ENCODE measurements at regions of chr3 and their contacts with region 1.

Region 1: DNA sequence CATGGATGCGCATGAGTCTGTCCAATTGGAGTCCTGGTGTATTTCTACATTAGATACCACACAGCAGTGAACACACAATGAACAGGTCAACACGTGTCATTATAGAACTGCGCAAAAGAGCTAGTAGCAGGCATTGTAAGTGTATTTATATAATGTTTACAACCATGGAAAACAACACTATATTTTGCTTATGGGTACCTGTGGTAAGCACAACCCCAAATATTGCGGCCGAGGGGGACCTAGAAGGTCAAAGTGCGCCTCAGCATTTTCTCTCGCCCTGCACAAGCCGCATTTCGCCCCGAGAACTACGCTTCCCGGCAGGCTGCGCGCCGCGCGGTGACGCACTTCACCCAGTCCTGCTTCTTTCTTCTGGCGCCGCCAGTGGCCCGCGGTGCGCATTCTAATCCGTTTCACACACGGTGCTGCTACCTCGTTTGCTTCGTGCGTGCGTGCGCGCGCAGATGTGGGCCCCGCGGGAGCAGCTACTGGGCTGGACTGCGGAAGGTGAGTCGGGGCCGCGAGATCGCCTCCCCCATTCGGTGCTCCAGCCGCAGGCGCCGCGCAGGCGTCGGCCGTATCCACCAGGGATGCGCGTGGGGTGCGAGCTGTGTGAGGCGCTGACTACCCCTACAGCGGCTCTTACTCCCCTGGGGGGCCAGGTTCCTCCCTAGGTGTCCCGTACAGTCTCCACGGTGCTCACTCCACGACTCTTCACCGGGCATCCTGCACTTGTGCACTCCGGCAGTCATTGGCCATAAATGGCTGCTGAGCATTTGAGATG is at the start of gene ZNF589:
- DNase-seq: peak; percentile 90 to 96 (median 94)
- H3K4me3 ChIP-seq: peak within 1 kb of the TSS; percentile 64 to 99
- H3K4me3 Mint-ChIP-seq: peak within 1 kb of the TSS; percentile 87 to 97 (median 92)
- H3K27ac ChIP-seq: peak within 1 kb of the TSS; percentile 69
- H3K27ac Mint-ChIP-seq: peak within 1 kb of the TSS; percentile 87 to 96 (median 92)
- H3K4me1 ChIP-seq: peaks cover 30% of the 10 kb centered on the region
- H3K4me1 Mint-ChIP-seq: peaks cover 8 to 26% (median 11%) of the 10 kb centered on the region in 4 donors
- H3K27me3 ChIP-seq: no peaks in the 10 kb centered on the region
- H3K27me3 Mint-ChIP-seq: no peaks in the 10 kb centered on the region
- total RNA-seq, gene ZNF589: 49.4 to 58.6 TPM

Region 2: GRCh38 chr3:48058091-48058490 is 182.8 kb before region 1 on chr3:
- CTCF ChIA-PET with region 1: no interaction called
- POLR2A ChIA-PET with region 1: no interaction called
- intact Hi-C with region 1: no loop called
- DNase-seq: no peak
- H3K4me3 ChIP-seq: no peak overlapping the region
- H3K4me3 Mint-ChIP-seq: peak overlapping the region in 1 of 8 donors; percentile 11
- H3K27ac ChIP-seq: no peak overlapping the region
- H3K27ac Mint-ChIP-seq: peak overlapping the region in 3 of 7 donors; percentile 14 to 68 (median 47)
- H3K4me1 ChIP-seq: peaks cover 16% of the 10 kb centered on the region
- H3K4me1 Mint-ChIP-seq: peaks cover 13 to 27% (median 21%) of the 10 kb centered on the region in 4 donors
- H3K27me3 ChIP-seq: no peaks in the 10 kb centered on the region
- H3K27me3 Mint-ChIP-seq: no peaks in the 10 kb centered on the region

Region 3: GRCh38 chr3:48142316-48142870 is 98.5 kb before region 1 on chr3:
- CTCF ChIA-PET with region 1: no interaction called
- POLR2A ChIA-PET with region 1: no interaction called
- intact Hi-C with region 1: no loop called
- DNase-seq: no peak
- H3K4me3 ChIP-seq: no peak overlapping the region
- H3K4me3 Mint-ChIP-seq: no peak overlapping the region
- H3K27ac ChIP-seq: no peak overlapping the region
- H3K27ac Mint-ChIP-seq: no peak overlapping the region
- H3K4me1 ChIP-seq: no peaks in the 10 kb centered on the region
- H3K4me1 Mint-ChIP-seq: no peaks in the 10 kb centered on the region
- H3K27me3 ChIP-seq: no peaks in the 10 kb centered on the region
- H3K27me3 Mint-ChIP-seq: no peaks in the 10 kb centered on the region

Region 4: GRCh38 chr3:48188266-48189201 is 52.4 kb before region 1 on chr3 and contains the start of gene CDC25A:
- CTCF ChIA-PET with region 1: interaction called, 3 read pairs
- POLR2A ChIA-PET with region 1: interaction called, 8 read pairs
- intact Hi-C with region 1: loop called (anchors 1 kb)
- DNase-seq: peak; percentile 88 to 97 (median 93)
- H3K4me3 ChIP-seq: peak within 1 kb of the TSS in 1 of 2 donors; percentile 95
- H3K4me3 Mint-ChIP-seq: peak within 1 kb of the TSS; percentile 92 to 96 (median 95)
- H3K27ac ChIP-seq: peak within 1 kb of the TSS; percentile 44
- H3K27ac Mint-ChIP-seq: peak within 1 kb of the TSS; percentile 38 to 90 (median 83)
- H3K4me1 ChIP-seq: peaks cover 12% of the 10 kb centered on the region
- H3K4me1 Mint-ChIP-seq: peaks cover 8 to 23% (median 15%) of the 10 kb centered on the region in 4 donors
- H3K27me3 ChIP-seq: no peaks in the 10 kb centered on the region
- H3K27me3 Mint-ChIP-seq: peaks cover 3 to 11% of the 10 kb centered on the region in 2 donors
- total RNA-seq, gene CDC25A: not detected

Region 5: GRCh38 chr3:48268381-48269183 is 27.7 kb after region 1 on chr3:
- CTCF ChIA-PET with region 1: interaction called, 6 read pairs
- POLR2A ChIA-PET with region 1: interaction called, 36 read pairs
- intact Hi-C with region 1: loop called (anchors 1 kb)
- DNase-seq: peak; percentile 70 to 95 (median 82)
- H3K4me3 ChIP-seq: peak overlapping the region; percentile 30 to 31
- H3K4me3 Mint-ChIP-seq: peak overlapping the region; percentile 74 to 89 (median 84)
- H3K27ac ChIP-seq: peak overlapping the region; percentile 53
- H3K27ac Mint-ChIP-seq: peak overlapping the region; percentile 81 to 96 (median 92)
- H3K4me1 ChIP-seq: peaks cover 25% of the 10 kb centered on the region
- H3K4me1 Mint-ChIP-seq: peaks cover 24 to 42% (median 34%) of the 10 kb centered on the region in 4 donors
- H3K27me3 ChIP-seq: no peaks in the 10 kb centered on the region
- H3K27me3 Mint-ChIP-seq: no peaks in the 10 kb centered on the region

Region 6: DNA sequence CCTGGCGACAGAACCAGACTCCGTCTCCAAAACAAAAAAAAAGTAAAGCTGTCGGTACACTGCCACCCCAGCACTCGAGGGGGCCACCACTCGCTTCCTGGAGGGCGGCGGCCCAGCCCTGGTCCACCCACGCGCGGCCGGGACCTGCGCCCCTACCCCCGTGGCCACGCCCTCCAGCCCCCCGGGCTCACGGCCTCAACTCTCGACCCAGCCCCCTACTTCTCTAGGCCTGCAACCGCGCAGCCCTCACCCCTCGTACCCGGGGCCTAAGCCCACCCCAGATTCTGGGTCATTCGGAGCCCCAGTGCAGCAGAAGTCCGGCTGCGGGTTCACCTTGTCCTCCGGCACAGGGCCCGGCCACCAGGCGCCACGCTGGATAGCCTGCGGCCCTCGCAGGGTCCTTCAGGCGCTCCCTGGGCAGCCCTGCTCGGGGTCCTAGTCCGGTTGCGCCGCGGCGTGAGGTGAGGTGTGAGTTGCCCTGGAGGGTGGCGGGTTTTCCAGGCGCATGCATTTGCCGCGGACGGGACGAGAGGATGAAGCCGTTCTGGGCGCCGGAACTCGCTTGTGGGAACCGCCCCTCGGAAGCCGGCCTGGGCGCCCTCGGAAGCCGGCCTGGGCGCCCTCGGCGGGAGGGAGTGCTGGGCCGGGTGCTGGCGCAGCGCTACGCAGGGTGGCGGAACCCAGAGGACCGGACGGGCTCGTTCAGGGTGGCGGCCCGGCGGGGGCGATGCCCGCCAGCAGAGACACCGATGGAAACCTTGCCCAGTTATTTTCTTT is 60.3 kb after region 1 on chr3:
- CTCF ChIA-PET with region 1: no interaction called
- POLR2A ChIA-PET with region 1: interaction called, 15 read pairs
- intact Hi-C with region 1: loop called (anchors 1 kb)
- DNase-seq: peak; percentile 83 to 89 (median 85)
- H3K4me3 ChIP-seq: peak within 1 kb of the TSS; percentile 86 to 89
- H3K4me3 Mint-ChIP-seq: peak within 1 kb of the TSS; percentile 91 to 96 (median 94)
- H3K27ac ChIP-seq: peak within 1 kb of the TSS; percentile 90
- H3K27ac Mint-ChIP-seq: peak within 1 kb of the TSS; percentile 78 to 99 (median 97)
- H3K4me1 ChIP-seq: peaks cover 20% of the 10 kb centered on the region
- H3K4me1 Mint-ChIP-seq: peaks cover 25 to 57% (median 32%) of the 10 kb centered on the region in 4 donors
- H3K27me3 ChIP-seq: no peaks in the 10 kb centered on the region
- H3K27me3 Mint-ChIP-seq: no peaks in the 10 kb centered on the region